Right ventricle myocardium inferior (tissue), 1 donor: ENCODE measurements at regions of chr15 and their contacts with region 1.

Region 1: DNA sequence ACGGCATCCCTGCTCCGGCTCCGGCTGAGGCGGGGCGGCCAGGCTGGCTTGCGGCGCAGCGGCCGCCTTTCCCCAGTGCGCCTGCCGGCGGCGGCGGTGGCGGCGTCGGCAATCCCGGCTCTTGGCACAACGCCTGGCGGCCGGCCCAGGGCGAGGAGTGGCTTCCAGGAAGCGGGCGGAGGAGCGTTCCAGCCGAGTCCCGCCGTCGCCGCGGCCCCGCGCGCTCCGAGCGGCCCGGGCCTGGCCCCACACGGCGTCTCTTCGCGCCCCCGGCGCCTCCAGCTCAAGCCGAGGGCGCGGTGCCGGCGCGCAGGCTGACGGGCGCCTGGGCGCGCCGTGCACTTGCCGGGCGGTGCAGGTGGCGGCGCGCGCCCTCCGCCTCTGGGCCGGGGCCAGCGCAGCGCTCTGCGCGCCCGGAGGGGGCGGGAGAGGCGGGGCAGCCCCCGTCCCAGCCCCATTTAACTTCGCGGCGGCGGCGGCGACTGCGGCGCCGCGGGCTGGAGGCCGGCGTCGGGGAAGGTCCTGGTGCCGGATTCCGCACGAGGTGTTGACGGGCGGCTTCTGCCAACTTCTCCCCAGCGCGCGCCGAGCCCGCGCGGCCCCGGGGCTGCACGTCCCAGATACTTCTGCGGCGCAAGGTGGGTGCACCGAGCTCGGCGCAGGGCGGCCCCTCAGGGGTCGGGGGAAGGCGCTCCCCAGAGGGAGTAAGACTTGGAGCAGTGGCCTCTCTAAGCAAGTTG is at the start of gene ADAMTSL3:
- DNase-seq: peak; percentile 91
- ATAC-seq: peak; percentile 65
- total RNA-seq, gene ADAMTSL3: 11.5 TPM

Region 2: DNA sequence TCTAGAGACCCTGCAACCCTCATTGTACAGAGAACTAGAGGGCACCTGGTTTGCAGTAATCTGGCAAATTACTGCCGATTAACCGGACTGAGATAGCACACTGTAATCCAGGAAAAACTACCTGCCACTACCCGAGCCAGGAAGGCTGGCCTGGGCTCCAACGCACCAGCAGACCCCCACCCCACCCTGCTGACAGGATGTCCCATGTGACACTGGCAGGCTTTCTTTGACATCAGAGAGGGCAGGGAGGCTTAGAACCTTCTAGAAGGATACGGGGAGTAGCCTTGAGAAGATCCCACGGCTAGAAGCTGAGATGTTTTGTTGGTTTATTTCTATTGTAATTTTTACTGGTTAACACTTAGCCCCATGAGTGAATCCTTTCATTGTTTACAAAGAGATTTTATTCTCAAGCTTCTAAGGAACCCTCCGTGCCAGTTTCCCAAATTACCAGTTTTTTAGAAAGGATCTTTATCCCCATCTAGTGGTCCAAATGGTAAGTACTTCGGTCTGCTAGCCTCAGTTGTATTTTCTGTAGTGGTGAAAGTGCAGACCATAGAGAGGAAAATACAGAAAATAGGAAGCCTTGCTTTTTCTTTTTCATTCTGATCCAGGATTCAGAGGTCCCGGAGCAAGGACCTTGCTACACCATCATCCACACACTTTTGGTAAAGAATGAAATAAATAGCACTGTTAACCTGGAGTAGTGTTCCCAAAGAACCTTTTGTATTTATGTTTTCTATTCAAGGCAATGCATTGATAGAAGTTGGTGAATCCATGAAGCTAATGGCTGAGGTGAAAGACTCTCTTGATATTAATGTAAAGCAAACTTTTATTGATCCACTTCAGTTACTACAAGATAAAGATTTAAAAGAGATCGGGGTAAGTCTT is 81.7 kb before region 1 on chr15:
- intact Hi-C with region 1: loop called (anchors 5 kb)
- DNase-seq: no peak
- ATAC-seq: no peak

Region 3: DNA sequence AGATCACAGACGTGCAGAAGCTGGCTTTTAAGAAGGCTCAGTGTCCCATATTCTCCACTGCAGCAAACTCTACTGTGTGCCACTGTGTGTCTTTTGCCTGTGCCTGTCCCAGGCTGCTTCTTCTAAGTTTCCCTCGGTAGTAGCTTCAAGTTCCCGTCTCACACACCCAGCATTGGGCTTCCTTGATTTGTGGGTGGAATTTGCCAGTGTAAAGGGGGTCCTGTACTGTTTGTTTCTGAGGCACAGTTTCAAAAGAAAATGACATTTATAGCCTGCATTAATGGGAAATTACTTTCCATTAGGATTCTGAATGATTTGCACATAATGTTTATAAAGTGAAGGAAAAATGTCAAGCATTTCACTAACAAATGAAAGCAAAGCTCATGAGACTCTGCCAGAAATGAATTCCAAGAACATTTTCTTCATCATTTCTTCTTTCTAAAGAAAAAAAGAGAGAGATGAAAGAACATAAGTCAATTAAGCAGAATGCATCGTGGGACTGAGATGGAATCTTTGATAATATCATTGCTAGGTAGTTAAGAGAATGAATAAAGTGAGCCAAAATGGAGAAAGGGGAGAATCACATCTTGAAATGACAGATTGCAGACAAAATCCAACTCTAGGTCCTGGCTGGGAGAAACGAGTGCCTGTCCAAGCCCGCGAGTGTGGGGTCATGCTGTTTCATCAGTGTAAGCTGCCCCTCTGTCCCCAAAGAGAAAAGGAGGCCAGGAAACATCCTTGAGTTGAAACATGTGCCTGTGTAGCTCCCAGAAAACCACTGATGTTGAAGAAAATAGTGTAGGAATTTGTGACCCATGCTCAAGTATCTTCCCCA is 48.5 kb before region 1 on chr15:
- intact Hi-C with region 1: loop called (anchors 5 kb)
- DNase-seq: peak; percentile 78
- ATAC-seq: peak; percentile 93

Region 4: GRCh38 chr15:83698294-83698693 is 44.5 kb after region 1 on chr15:
- intact Hi-C with region 1: loop called (anchors 2 kb)
- DNase-seq: no peak
- ATAC-seq: peak; percentile 79

Region 5: DNA sequence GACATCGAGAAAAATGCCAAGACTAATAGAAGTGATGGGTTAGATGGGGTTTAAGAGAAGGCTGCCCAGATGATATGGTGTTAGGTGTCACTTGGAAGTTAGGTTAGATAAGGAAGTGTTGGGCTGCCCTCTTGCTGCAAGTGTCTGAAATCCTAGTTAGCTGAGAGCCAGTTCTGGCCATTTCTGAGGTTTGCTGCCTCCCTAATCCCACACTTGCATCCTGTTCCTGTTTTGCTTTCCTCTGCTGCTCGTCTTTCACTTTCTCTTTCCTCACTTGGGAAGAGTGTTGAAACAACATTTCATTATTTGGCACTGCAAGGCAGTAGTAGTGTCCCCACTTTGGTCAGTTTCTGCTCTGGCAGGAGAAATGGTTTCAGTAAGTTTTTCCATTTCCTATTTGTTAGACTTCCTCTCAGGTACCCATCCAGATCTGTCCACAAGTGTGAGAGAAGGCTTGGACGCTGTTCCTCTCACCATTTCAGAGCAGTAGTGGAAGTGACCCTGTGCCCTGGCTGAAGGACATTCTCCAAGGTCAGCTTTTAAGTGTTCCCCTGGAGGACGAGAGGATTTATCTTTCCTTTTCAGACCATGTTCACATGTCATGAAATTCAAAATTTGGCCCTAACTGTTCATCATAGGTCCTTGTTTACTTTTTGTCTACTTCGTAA is 93.4 kb after region 1 on chr15:
- intact Hi-C with region 1: loop called (anchors 5 kb)
- DNase-seq: no peak
- ATAC-seq: peak; percentile 83

Region 6: DNA sequence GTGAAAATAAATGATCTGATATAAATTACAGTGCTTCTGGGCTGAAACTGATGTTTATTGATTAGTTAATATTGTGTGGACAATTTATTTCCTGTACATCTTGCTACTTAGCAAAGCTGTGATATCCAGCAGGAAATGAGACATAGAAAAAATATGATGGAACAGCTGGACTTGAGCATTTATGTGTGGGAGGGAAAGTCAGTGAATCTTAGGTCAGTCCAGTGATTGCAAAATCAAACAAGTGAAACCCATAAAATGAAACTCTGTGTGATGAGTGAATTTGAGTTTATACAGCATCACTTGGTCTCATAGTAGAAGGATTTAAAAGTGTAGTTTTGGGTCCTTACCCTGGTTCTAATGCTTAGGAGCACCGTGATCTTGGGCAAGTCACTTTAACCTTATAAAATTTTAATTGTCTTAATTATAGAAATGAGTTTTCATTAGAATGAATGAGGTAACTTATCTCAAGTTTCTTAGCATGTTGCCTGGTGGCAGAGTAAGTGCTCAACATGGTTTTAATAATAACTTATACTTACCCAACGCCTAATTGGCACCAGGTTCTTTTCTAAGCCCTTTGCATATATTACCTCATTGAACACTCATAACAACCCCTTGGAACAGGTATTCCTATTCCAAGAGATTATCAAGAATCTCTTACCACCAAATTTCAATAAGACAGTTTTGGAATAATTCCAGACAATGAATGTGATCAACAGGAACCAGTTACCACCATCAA is 194.7 kb after region 1 on chr15:
- intact Hi-C with region 1: loop called (anchors 10 kb)
- DNase-seq: no peak
- ATAC-seq: peak; percentile 48

Region 7: GRCh38 chr15:84035399-84035766 is 381.6 kb after region 1 on chr15:
- intact Hi-C with region 1: loop called (anchors 10 kb)
- DNase-seq: no peak
- ATAC-seq: peak; percentile 58